ENCODE measurements at regions of chr3 and their contacts with region 1.

Region 1: GRCh38 chr3:18444595-18445400 is 19.7 kb upstream of the SATB1 start:
- DNase-seq: peak; percentile 94
- H3K4me3 Mint-ChIP-seq: peak overlapping the region; percentile 96
- H3K27ac Mint-ChIP-seq: peak overlapping the region; percentile 99
- H3K4me1 Mint-ChIP-seq: peaks cover 27% of the 10 kb centered on the region
- H3K27me3 Mint-ChIP-seq: no peaks in the 10 kb centered on the region

Region 2: DNA sequence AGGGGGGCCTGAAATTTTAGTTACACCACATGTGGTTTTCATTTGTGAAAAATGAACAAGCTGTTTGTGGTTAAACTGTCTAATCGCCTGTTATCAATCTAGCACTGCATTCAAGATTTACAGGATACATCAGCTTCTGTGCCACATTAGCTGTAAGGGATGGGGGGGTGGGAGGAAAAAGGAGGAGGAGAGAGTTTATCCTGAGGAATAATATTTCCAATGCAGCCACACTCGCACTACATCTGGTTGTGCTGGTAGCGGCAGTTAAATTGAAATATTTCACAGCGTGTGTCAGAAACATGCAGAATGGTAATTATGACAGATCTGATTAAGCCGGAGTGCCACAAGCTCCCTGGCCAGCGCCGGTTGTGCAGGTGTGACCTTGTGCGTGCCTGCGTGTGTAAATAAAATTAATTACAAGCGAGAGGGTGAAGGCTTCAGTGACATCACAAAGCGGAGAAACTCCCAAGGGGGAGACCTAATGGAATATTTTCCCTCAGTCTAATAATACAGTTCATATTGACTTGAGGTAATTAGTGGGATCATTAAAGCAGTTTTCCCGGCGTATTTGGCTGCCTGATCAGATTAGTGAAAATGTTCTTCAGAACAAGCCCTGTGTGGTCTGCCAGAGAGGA is 75.1 kb before region 1 on chr3:
- intact Hi-C with region 1: no loop called
- DNase-seq: no peak
- H3K4me3 Mint-ChIP-seq: no peak overlapping the region
- H3K27ac Mint-ChIP-seq: peak overlapping the region; percentile 63
- H3K4me1 Mint-ChIP-seq: peaks cover 62% of the 10 kb centered on the region
- H3K27me3 Mint-ChIP-seq: no peaks in the 10 kb centered on the region

Region 3: GRCh38 chr3:18501679-18502343 is 57.0 kb after region 1 on chr3:
- intact Hi-C with region 1: loop called (anchors 5 kb)
- DNase-seq: no peak
- H3K4me3 Mint-ChIP-seq: no peak overlapping the region
- H3K27ac Mint-ChIP-seq: peak overlapping the region; percentile 36
- H3K4me1 Mint-ChIP-seq: peaks cover 31% of the 10 kb centered on the region
- H3K27me3 Mint-ChIP-seq: no peaks in the 10 kb centered on the region

Region 4: GRCh38 chr3:18679238-18679637 is 234.4 kb after region 1 on chr3:
- intact Hi-C with region 1: loop called (anchors 1 kb)
- DNase-seq: peak; percentile 87
- H3K4me3 Mint-ChIP-seq: peak overlapping the region; percentile 62
- H3K27ac Mint-ChIP-seq: peak overlapping the region; percentile 78
- H3K4me1 Mint-ChIP-seq: peaks cover 70% of the 10 kb centered on the region
- H3K27me3 Mint-ChIP-seq: no peaks in the 10 kb centered on the region

Region 5: DNA sequence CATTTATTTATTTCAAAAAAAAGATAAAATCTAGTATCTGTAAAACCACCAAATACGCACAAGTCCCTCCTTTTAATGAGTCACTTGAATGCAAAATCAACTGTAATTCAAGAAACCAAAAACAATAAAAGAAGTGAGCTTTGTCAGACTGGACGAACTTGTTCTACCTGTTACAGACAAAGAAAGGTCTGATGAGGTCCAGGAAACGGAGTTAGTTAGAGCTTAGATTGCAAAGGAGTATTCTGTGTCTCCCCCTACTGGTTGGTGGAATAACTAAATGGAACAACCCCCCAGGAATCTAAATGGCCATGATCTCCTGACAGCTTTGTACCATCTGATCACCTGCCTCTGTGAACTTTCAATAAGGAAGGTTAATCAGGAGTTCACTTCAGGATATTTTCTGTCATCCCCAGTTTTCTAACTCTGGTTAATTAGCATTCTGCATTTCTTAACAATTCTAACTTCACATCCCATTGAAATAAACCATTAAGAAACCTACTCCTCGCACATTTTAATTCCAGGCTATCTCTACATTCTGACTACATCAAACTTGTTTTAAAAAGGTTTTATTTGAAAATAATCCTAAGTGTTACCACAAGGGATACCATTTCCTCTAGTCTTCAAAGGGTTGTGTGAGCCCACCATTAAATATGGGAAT is 313.4 kb after region 1 on chr3:
- intact Hi-C with region 1: loop called (anchors 1 kb)
- DNase-seq: peak; percentile 88
- H3K4me3 Mint-ChIP-seq: peak overlapping the region; percentile 27
- H3K27ac Mint-ChIP-seq: peak overlapping the region; percentile 74
- H3K4me1 Mint-ChIP-seq: peaks cover 38% of the 10 kb centered on the region
- H3K27me3 Mint-ChIP-seq: no peaks in the 10 kb centered on the region